ENCODE measurements at regions of chr18 and their contacts with region 1.

Region 1: DNA sequence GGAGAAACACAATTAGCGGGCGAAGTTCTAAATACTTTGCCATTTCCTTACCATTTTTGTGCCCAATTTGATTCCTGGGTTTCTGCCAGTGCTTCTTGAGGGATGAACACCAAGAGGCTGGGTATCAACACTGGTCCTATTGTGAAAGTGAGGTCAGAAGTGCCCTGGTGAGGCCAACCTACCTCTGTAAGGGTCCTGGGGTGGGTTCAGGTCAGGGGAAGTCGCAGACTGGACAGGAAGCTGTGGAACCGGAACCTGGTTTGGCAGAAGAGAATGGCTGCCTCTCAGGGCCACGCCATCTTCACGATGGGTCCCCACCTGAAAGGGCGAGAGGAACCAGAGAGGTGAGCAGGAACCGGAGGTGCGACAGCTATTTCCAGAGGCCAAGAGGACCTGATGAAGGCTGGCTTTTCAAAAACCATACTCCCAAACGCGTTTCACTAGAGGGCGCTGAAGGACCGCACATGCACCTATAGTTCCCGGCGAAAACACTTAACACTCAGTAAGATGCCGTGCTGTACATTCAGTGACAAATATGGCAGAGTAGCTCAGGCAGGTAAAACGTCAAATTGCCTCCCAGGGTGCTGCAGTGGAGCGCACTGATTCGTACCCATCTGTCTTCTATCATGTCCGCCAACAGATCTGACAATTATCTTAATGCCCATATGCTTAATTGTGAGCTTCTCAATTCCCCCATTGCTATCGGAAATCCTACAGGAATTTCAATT is 275.3 kb upstream of the CCDC68 start:
- DNase-seq: peak; percentile 78 to 80
- H3K4me3 ChIP-seq: no peak overlapping the region
- H3K27ac ChIP-seq: peak overlapping the region in 2 of 3 donors; percentile 14 to 49
- H3K4me1 ChIP-seq: peaks cover 0 to 5% of the 10 kb centered on the region in 2 donors
- H3K27me3 ChIP-seq: no peaks in the 10 kb centered on the region
- CTCF ChIP-seq: peak; percentile 25 to 86 (median 78)
- POLR2A ChIP-seq: no peak

Region 2: DNA sequence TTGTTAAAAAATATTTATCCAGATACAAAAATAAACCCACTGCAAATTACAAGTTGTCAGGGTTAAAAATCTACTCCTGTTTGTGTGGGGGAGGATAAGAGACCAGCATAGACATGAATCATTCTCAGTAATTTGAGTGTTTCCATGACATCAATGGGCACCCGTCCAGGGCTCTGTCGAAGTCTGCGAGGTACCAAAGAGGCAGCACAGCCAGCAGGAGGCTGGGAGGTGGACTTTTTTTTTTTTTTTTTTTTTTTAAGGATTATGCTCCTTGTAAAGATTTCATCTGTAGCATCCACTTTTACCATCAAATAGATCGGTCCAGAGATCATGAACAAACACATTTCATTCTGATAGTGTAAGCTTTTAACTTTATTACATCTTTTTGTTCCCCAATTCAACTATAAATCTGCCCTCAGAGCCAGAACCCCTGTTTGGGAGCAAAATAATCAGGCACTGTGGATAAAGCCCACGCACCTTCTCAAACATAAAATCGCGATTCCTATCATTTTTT is 171.4 kb after region 1 on chr18:
- intact Hi-C with region 1: loop called (anchors 10 kb)
- DNase-seq: peak; percentile 64 to 69
- H3K4me3 ChIP-seq: no peak overlapping the region
- H3K27ac ChIP-seq: peak overlapping the region in 2 of 3 donors; percentile 54 to 64
- H3K4me1 ChIP-seq: peaks cover 8 to 9% of the 10 kb centered on the region in 2 donors
- H3K27me3 ChIP-seq: no peaks in the 10 kb centered on the region
- CTCF ChIP-seq: no peak
- POLR2A ChIP-seq: no peak

Region 3: DNA sequence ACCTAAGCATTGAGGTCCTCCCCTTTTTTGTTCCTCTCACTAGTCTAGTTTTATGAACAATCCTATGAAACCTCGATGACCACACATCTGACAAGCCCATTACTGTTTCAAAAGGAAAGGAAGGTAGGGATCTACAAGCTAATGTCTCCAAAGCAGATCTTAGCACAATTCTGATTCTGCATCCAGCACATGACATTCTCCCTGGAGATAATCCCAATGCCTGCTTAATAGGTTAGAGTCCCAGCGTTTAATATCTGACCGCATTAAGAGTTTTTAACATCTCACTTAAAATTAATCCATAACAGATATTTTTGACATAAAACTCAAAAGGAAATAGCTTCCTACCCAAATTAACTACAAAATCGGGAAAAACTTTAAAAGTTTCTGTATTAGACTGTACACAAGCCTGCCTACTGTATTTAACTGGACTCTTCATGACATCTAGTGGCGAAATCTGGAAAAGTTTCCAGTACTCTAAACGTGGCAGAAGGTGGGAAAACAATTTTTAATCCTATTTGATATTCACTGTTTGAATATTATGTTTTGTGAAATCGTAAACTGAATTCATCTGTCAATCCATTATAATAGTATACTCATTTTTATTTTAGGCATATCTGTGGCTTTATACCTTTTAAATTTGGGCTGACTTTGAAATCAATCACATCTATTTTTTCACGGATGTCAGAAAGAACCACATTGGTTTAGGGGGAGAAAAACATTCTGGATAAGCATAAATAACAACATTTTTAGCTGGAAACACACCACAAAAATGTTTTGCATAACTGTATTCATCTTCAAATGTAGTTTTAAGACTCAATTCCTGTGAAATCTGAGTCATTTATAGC is 1341.5 kb after region 1 on chr18:
- intact Hi-C with region 1: loop called (anchors 10 kb)
- DNase-seq: no peak
- H3K4me3 ChIP-seq: no peak overlapping the region
- H3K27ac ChIP-seq: peak overlapping the region in 2 of 3 donors; percentile 31 to 83
- H3K4me1 ChIP-seq: peaks cover 20 to 21% of the 10 kb centered on the region in 2 donors
- H3K27me3 ChIP-seq: no peaks in the 10 kb centered on the region
- CTCF ChIP-seq: peak in 5 of 6 experiments; percentile 55 to 95 (median 76)
- POLR2A ChIP-seq: no peak

Measured in thyroid gland (tissue), 4 donors.